IMR-90 (cell line): ENCODE measurements at regions of chr6 and their contacts with region 1.

Region 1: GRCh38 chr6:10694302-10695085 is at the starts of genes C6orf52 and PAK1IP1:
- DNase-seq: peak; percentile 91
- ATAC-seq: peak; percentile 99
- H3K4me3 ChIP-seq: peak within 1 kb of the TSS; percentile 82
- H3K27ac ChIP-seq: peak within 1 kb of the TSS; percentile 86
- H3K4me1 ChIP-seq: peaks cover 2% of the 10 kb centered on the region; the same call in 1 of the 2 replicates
- H3K27me3 ChIP-seq: no peaks in the 10 kb centered on the region
- CTCF ChIP-seq: no peak
- POLR2A ChIP-seq: peak; percentile 90
- RAD21 ChIP-seq: no peak; the same call in 1 of the 2 replicates
- total RNA-seq, gene C6orf52: not detected in 2 replicates
- total RNA-seq, gene PAK1IP1: 22.9 and 28.6 TPM in 2 replicates

Region 2: GRCh38 chr6:10451828-10452509 is 242.5 kb before region 1 on chr6:
- CTCF ChIA-PET with region 1: no interaction called
- POLR2A ChIA-PET with region 1: no interaction called
- dilution Hi-C with region 1: no loop called
- in situ Hi-C with region 1: no loop called
- intact Hi-C with region 1: no loop called
- DNase-seq: peak; percentile 50
- ATAC-seq: peak; percentile 83
- H3K4me3 ChIP-seq: no peak overlapping the region
- H3K27ac ChIP-seq: no peak overlapping the region
- H3K4me1 ChIP-seq: no peaks in the 10 kb centered on the region
- H3K27me3 ChIP-seq: no peaks in the 10 kb centered on the region
- CTCF ChIP-seq: no peak
- POLR2A ChIP-seq: no peak
- RAD21 ChIP-seq: no peak

Region 3: GRCh38 chr6:10478187-10479040 is 216.1 kb before region 1 on chr6:
- CTCF ChIA-PET with region 1: no interaction called
- POLR2A ChIA-PET with region 1: interaction called, 11 read pairs
- dilution Hi-C with region 1: no loop called
- in situ Hi-C with region 1: no loop called
- intact Hi-C with region 1: loop called (anchors 1 kb)
- DNase-seq: peak; percentile 42
- ATAC-seq: peak; percentile 72
- H3K4me3 ChIP-seq: no peak overlapping the region
- H3K27ac ChIP-seq: no peak overlapping the region
- H3K4me1 ChIP-seq: no peaks in the 10 kb centered on the region
- H3K27me3 ChIP-seq: no peaks in the 10 kb centered on the region
- CTCF ChIP-seq: peak; percentile 55
- POLR2A ChIP-seq: no peak
- RAD21 ChIP-seq: peak; percentile 60

Region 4: GRCh38 chr6:10613066-10613465 is 81.4 kb before region 1 on chr6:
- CTCF ChIA-PET with region 1: no interaction called
- POLR2A ChIA-PET with region 1: no interaction called
- dilution Hi-C with region 1: no loop called
- in situ Hi-C with region 1: no loop called
- intact Hi-C with region 1: loop called (anchors 2 kb)
- DNase-seq: peak; percentile 65
- ATAC-seq: peak; percentile 71
- H3K4me3 ChIP-seq: no peak overlapping the region
- H3K27ac ChIP-seq: peak overlapping the region; percentile 63; the same call in 1 of the 2 replicates
- H3K4me1 ChIP-seq: peaks cover 11% of the 10 kb centered on the region
- H3K27me3 ChIP-seq: no peaks in the 10 kb centered on the region
- CTCF ChIP-seq: no peak
- POLR2A ChIP-seq: no peak
- RAD21 ChIP-seq: no peak

Region 5: GRCh38 chr6:10668126-10668917 is 26.2 kb before region 1 on chr6:
- CTCF ChIA-PET with region 1: no interaction called
- POLR2A ChIA-PET with region 1: no interaction called
- dilution Hi-C with region 1: no loop called
- in situ Hi-C with region 1: no loop called
- intact Hi-C with region 1: no loop called
- DNase-seq: no peak
- ATAC-seq: no peak
- H3K4me3 ChIP-seq: no peak overlapping the region
- H3K27ac ChIP-seq: no peak overlapping the region
- H3K4me1 ChIP-seq: no peaks in the 10 kb centered on the region
- H3K27me3 ChIP-seq: no peaks in the 10 kb centered on the region; the same call in 1 of the 2 replicates
- CTCF ChIP-seq: no peak
- POLR2A ChIP-seq: no peak
- RAD21 ChIP-seq: no peak

Region 6: GRCh38 chr6:10747251-10747972 is 52.9 kb after region 1 on chr6 and contains the start of gene TMEM14B:
- CTCF ChIA-PET with region 1: no interaction called
- POLR2A ChIA-PET with region 1: no interaction called
- dilution Hi-C with region 1: no loop called
- in situ Hi-C with region 1: no loop called
- intact Hi-C with region 1: loop called (anchors 1 kb)
- DNase-seq: peak; percentile 94
- ATAC-seq: peak; percentile 99
- H3K4me3 ChIP-seq: peak within 1 kb of the TSS; percentile 94
- H3K27ac ChIP-seq: peak within 1 kb of the TSS; percentile 79
- H3K4me1 ChIP-seq: peaks cover 3% of the 10 kb centered on the region
- H3K27me3 ChIP-seq: no peaks in the 10 kb centered on the region
- CTCF ChIP-seq: no peak
- POLR2A ChIP-seq: peak; percentile 78
- RAD21 ChIP-seq: no peak
- total RNA-seq, gene TMEM14B: 66.5 and 158 TPM in 2 replicates

Region 7: DNA sequence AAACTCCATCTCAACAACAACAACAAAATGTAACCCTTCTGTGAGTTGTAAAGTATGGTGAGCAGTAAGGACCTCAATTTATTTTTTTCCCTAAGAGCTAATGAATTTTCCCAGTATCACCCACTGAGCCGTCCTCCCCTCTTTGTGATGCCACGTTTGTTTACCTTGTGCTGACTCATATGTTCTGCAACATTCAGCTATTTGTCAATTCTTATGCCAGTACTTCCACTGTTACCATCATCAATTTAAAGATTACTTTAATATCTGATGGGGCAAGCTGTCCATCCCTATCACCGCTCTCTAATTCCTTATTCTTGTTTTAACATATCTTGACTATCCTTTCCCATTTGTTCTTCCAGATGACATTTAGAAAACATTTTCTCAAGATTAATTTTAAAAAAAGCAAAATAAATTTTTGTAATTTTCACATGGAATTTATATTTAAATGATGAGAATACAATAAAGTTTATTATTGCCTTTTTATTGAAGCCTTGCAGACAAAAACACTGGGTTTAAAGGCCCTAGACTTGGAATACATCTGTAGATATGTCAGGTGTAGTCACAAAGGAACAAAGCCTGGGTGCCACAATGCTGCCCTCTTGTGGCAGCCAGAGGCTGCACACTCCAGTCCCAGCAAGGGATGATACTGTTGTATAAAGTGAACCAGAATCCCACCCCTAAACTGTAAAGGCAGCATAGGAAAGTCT is 106.5 kb after region 1 on chr6:
- CTCF ChIA-PET with region 1: no interaction called
- POLR2A ChIA-PET with region 1: no interaction called
- dilution Hi-C with region 1: no loop called
- in situ Hi-C with region 1: no loop called
- intact Hi-C with region 1: loop called (anchors 2 kb)
- DNase-seq: peak; percentile 60
- ATAC-seq: peak; percentile 99
- H3K4me3 ChIP-seq: no peak overlapping the region
- H3K27ac ChIP-seq: no peak overlapping the region
- H3K4me1 ChIP-seq: no peaks in the 10 kb centered on the region
- H3K27me3 ChIP-seq: no peaks in the 10 kb centered on the region
- CTCF ChIP-seq: peak; percentile 93
- POLR2A ChIP-seq: no peak
- RAD21 ChIP-seq: peak; percentile 90